Mammary epithelial cell (primary cell): ENCODE measurements at regions of chr19 and their contacts with region 1.

Region 1: DNA sequence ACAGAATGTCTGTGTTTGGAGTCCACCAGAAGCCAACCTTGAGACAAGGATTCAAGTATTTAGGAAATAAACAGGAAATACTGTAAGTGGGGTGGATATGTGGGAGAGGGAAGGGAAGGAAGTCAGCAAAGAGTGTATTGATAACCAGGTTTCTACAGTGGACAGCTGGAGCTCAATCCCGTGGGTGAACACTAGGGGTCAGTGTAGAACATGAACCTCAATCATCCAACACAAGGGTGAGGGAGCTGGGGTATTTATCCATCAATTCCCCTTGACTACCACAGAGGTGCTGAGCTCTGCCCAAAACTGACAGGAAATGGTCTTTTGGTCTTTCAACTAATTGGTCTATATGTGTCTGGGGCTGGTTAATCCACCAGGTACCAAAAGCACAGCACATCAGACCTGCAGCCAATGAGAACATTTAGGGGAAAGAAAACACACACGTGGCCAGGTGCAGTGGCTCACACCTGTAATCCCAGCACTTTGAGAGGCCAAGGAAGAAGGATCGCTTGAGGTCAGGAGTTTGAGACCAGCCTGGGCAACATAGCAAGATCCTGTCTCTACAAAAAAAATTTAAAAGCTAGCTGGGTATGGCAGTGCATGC is 5.6 kb upstream of the SYDE1 start:
- DNase-seq: peak; percentile 26
- H3K4me3 ChIP-seq: no peak overlapping the region
- H3K27ac ChIP-seq: no peak overlapping the region
- H3K4me1 ChIP-seq: peaks cover 3% of the 10 kb centered on the region
- H3K27me3 ChIP-seq: no peaks in the 10 kb centered on the region
- CTCF ChIP-seq: peak; percentile 74 to 76

Region 2: GRCh38 chr19:15028490-15028889 is 73.1 kb before region 1 on chr19:
- CTCF ChIA-PET with region 1: interaction called, 3 read pairs
- dilution Hi-C with region 1: loop called (anchors 5 kb)
- in situ Hi-C with region 1: no loop called
- intact Hi-C with region 1: no loop called
- DNase-seq: no peak
- H3K4me3 ChIP-seq: no peak overlapping the region
- H3K27ac ChIP-seq: no peak overlapping the region
- H3K4me1 ChIP-seq: no peaks in the 10 kb centered on the region
- H3K27me3 ChIP-seq: no peaks in the 10 kb centered on the region
- CTCF ChIP-seq: no peak

Region 3: DNA sequence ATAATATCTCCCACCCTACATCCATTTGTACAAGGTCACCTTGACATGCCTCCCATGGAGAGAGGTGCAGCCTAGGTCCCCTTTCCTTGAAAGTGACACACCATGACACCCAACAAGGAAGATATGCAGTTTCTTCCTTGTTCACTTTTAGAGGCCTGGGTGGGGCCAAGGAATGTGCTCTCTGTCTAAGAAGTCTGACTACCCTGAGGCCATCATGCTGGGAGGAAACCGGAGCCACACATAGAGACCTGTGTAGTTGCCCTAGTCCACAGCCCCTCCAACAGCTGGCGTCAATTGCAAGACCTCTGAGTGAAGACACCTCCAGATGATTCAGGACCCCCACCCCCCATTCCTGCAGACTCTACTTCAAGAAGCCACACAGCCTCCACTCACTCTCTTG is 16.7 kb after region 1 on chr19:
- CTCF ChIA-PET with region 1: interaction called, 35 read pairs
- dilution Hi-C with region 1: no loop called
- in situ Hi-C with region 1: no loop called
- intact Hi-C with region 1: no loop called
- DNase-seq: no peak
- H3K4me3 ChIP-seq: no peak overlapping the region
- H3K27ac ChIP-seq: no peak overlapping the region
- H3K4me1 ChIP-seq: no peaks in the 10 kb centered on the region
- H3K27me3 ChIP-seq: no peaks in the 10 kb centered on the region
- CTCF ChIP-seq: no peak

Region 4: DNA sequence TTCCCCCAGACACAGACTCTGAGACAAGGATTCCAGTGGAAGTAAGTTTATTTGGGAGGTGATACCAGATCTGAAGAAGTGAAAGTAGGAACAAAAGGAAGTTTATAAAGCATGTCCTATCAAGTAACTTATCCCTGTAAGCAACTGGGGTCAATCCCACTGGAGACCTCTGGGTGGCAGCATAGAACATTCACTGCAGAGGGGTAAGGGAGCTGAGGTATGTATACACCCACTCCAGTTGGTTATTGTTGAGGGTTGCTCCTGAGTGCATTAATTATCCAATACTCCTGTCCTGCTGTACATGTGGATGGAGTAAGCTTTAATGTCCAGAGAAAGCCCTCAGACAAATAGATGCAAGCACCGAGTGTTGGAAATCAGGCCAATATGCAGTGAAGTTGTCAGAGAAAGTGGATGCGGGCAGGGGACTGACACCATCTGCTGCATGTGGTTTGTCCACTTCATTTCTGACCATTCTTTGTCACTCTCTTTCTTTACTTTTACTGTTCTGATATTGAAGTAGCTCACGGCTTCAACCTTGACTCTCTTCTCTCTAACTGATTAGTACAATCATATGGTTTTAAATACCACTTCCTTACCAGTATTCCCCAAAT is 52.5 kb after region 1 on chr19:
- CTCF ChIA-PET with region 1: interaction called, 7 read pairs
- dilution Hi-C with region 1: no loop called
- in situ Hi-C with region 1: no loop called
- intact Hi-C with region 1: loop called (anchors 1 kb)
- DNase-seq: peak; percentile 41
- H3K4me3 ChIP-seq: no peak overlapping the region
- H3K27ac ChIP-seq: no peak overlapping the region
- H3K4me1 ChIP-seq: no peaks in the 10 kb centered on the region
- H3K27me3 ChIP-seq: no peaks in the 10 kb centered on the region
- CTCF ChIP-seq: peak; percentile 70 to 81

Region 5: DNA sequence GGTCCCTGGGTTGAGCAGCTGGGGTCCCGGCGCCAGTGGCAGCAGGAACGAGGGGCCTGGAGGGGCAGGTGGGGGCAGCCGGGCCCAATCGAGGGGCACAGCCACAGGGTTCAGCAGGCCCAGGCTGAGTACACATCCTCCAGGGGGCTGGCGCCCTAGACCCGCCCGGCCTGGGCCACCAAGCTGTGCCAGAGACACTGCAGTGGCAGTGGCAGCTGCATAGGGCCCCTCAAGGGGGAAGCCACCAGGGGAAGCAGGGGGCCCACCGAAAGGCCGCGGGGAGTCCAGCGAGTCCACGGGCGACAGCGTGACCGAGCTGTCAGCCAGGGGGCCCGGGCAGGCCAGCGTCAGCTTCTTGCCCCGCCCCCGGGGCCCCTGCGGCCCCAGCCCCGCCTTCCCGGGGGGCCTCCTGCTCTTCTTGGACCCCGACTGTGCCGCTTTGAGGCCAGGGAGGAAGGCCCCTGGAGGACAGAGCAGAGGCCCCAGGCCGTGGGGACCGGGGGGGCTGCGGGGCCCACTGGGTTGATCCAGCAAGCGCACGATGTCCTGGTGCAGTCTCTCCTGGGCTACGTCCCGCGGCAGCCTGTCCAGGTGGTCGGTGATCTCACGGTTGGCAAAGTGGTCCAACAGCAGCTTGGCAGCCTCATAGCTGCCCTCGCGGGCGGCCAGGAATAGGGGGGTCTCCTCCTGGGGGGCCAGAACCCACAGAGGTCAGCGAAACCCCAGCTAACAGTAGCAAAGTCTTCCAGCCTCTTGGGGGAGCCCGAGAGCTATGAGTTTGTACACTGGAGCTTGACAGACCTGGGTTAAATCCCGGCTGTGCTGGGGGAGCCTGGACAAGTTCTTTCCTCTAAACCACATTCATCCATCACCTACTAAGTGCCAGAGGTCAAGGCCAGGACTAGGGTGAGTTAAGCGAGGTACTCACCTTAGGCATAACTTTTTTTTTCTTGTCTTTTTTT is 59.7 kb after region 1 on chr19:
- CTCF ChIA-PET with region 1: interaction called, 40 read pairs
- dilution Hi-C with region 1: no loop called
- in situ Hi-C with region 1: no loop called
- intact Hi-C with region 1: no loop called
- DNase-seq: no peak
- H3K4me3 ChIP-seq: no peak overlapping the region
- H3K27ac ChIP-seq: no peak overlapping the region
- H3K4me1 ChIP-seq: no peaks in the 10 kb centered on the region
- H3K27me3 ChIP-seq: no peaks in the 10 kb centered on the region
- CTCF ChIP-seq: peak; percentile 32 to 52

Region 6: GRCh38 chr19:15297416-15298224 is 196.0 kb after region 1 on chr19:
- CTCF ChIA-PET with region 1: interaction called, 17 read pairs
- dilution Hi-C with region 1: no loop called
- in situ Hi-C with region 1: no loop called
- intact Hi-C with region 1: no loop called
- DNase-seq: peak; percentile 65
- H3K4me3 ChIP-seq: no peak overlapping the region
- H3K27ac ChIP-seq: peak overlapping the region; percentile 19
- H3K4me1 ChIP-seq: peaks cover 67% of the 10 kb centered on the region
- H3K27me3 ChIP-seq: no peaks in the 10 kb centered on the region
- CTCF ChIP-seq: peak in 1 of 2 donors; percentile 44